ENCODE measurements at regions of chr11 and their contacts with region 1.

Region 1: DNA sequence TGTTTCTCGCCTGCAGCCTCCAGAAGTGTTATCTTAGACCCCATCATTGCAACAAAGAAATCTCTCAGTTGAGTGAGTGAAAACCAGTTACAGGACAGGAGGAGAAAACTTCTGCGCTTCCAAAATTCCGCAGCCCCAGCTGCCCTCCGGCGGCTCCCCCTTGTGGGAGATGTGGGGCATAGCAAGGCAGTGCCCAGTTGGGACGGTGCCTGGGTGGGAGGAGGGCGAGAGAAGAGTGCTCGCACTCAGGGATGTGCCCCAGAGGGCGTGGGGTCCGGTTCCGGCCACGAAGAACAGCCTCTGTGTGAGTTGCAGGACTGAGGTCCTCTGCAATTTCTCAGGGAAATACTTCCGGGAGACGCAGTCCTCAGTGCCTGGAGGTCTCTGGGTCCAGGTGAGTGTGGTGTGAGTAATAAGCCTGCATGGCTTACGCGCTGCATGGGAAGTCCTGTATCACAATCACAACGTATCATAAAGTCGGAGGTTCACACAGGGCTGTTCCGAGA is 87.0 kb upstream of the BLID start:
- DNase-seq: peak; percentile 57 to 80 (median 66)
- H3K4me3 ChIP-seq: peak overlapping the region in 1 of 4 donors; percentile 34
- H3K27ac ChIP-seq: peak overlapping the region in 1 of 5 donors; percentile 46
- H3K4me1 ChIP-seq: no peaks in the 10 kb centered on the region
- H3K27me3 ChIP-seq: no peaks in the 10 kb centered on the region
- CTCF ChIP-seq: peak; percentile 89 to 98 (median 92)
- POLR2A ChIP-seq: no peak

Region 2: DNA sequence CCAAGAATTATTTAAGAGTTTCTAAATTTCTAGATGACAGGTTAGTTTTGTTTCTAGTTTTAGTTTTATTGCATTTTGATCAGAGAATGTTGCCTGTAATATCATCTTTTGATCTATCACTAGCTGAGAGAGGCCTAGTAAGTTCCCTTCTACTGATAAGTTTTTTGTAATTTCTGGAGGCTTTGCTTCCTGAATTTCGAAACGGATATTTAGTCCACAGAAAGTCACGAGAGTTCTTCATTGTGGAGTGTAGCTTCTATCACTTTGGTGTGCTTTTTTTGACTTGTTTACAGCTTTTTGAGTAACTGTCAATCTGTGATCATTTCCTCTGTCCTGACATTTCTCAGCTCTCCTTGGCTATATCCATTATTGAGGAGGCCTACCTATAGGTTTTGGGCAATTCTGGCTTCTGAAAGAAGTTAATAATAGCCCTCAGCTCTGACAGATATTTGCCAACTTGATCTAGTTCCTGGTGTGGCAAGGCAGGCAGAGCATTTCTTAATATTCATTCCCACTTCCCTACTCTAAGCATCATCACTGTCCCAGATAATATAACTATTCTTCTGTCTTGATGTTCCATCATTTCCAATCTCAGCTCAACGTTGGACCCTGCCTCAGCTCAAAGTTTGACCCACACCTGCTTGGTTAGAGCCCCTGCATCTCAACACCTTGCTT is 258.3 kb before region 1 on chr11:
- intact Hi-C with region 1: no loop called
- DNase-seq: no peak
- H3K4me3 ChIP-seq: no peak overlapping the region
- H3K27ac ChIP-seq: no peak overlapping the region
- H3K4me1 ChIP-seq: no peaks in the 10 kb centered on the region
- H3K27me3 ChIP-seq: no peaks in the 10 kb centered on the region
- CTCF ChIP-seq: no peak
- POLR2A ChIP-seq: no peak

Region 3: DNA sequence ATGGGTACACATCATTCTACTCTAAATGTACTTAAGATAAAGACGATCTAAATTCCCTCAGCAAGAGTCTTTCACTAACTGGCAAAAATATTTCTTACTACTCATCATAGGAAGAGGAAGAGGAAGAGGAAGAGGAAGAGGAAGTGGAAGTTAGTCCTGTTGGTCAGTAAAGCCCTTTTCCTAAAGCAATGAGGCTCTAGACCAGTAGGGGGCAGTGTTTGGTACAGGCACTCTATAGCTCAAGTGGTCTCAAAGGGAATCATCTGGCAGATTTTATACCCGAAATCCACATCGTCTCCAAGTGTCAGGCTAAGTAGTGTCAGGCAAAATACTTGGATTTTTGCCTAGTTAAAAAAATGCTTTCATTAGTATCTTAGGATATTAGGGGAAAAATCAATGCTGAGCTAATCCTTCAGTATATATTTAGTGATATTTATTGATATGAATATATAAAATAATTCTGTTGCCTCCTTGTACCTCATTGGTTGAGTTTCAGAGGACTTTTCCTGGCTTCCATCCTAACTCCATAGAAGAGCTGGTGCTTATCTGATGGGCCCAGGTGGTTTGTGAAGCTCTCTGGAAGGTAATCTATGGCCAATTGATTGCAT is 94.7 kb before region 1 on chr11:
- intact Hi-C with region 1: loop called (anchors 10 kb)
- DNase-seq: peak in 3 of 7 donors; percentile 21 to 42 (median 34)
- H3K4me3 ChIP-seq: no peak overlapping the region
- H3K27ac ChIP-seq: no peak overlapping the region
- H3K4me1 ChIP-seq: no peaks in the 10 kb centered on the region
- H3K27me3 ChIP-seq: no peaks in the 10 kb centered on the region
- CTCF ChIP-seq: peak in 5 of 6 experiments; percentile 28 to 60 (median 48)
- POLR2A ChIP-seq: no peak

Region 4: DNA sequence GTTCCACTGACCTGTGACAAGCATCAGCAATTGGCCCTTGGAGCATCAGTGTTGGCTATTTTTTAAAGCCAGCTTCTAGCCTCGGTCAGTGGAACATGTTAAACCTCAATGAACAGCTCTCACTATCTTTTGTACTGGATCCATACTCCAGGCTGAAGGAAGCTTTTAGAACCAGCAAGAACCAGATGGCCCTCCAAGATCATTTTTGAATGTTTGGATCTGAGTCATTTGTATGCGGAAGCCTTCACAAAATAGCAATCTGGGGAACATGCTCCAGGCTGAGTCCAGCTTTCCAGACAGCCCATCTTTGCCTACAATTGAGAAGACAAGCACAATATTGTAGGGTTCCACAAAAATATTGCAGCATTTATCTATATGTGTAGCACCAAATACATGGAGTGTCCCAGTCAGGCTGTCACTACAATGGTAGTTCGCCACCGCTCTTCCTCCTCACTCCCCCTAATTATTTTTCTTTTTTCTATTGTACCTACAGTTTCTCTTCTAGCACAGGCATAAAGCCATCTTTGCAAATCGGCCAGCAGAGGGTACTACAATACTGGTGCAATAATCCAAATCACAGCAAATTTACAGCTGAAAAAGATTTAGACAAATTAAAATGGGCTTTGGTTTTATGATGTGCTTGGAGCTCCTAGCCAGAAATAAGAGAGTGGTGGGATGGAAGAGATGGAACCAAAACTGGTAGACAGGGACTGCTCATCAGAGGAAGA is 90.5 kb after region 1 on chr11:
- intact Hi-C with region 1: no loop called
- DNase-seq: peak in 4 of 7 donors; percentile 24 to 58 (median 36)
- H3K4me3 ChIP-seq: no peak overlapping the region
- H3K27ac ChIP-seq: no peak overlapping the region
- H3K4me1 ChIP-seq: no peaks in the 10 kb centered on the region
- H3K27me3 ChIP-seq: no peaks in the 10 kb centered on the region
- CTCF ChIP-seq: peak in 5 of 6 experiments; percentile 44 to 65 (median 55)
- POLR2A ChIP-seq: no peak

Measured in adrenal gland (tissue), 19 donors.